Prostate gland (tissue), 2 donors: ENCODE measurements at regions of chr15 and their contacts with region 1.

Region 1: GRCh38 chr15:35141743-35142471 is 56.8 kb upstream of the NANOGP8 start:
- DNase-seq: no peak
- H3K4me3 ChIP-seq: no peak overlapping the region
- H3K27ac ChIP-seq: peak overlapping the region; percentile 25 to 51
- H3K4me1 ChIP-seq: no peaks in the 10 kb centered on the region
- H3K27me3 ChIP-seq: no peaks in the 10 kb centered on the region
- CTCF ChIP-seq: no peak
- POLR2A ChIP-seq: no peak

Region 2: GRCh38 chr15:35186346-35186745 is 44.4 kb after region 1 on chr15:
- intact Hi-C with region 1: loop called (anchors 5 kb)
- DNase-seq: no peak
- H3K4me3 ChIP-seq: no peak overlapping the region
- H3K27ac ChIP-seq: no peak overlapping the region
- H3K4me1 ChIP-seq: no peaks in the 10 kb centered on the region
- H3K27me3 ChIP-seq: no peaks in the 10 kb centered on the region
- CTCF ChIP-seq: no peak
- POLR2A ChIP-seq: no peak